SK-N-SH (cell line): ENCODE measurements at regions of chr21 and their contacts with region 1.

Region 1: DNA sequence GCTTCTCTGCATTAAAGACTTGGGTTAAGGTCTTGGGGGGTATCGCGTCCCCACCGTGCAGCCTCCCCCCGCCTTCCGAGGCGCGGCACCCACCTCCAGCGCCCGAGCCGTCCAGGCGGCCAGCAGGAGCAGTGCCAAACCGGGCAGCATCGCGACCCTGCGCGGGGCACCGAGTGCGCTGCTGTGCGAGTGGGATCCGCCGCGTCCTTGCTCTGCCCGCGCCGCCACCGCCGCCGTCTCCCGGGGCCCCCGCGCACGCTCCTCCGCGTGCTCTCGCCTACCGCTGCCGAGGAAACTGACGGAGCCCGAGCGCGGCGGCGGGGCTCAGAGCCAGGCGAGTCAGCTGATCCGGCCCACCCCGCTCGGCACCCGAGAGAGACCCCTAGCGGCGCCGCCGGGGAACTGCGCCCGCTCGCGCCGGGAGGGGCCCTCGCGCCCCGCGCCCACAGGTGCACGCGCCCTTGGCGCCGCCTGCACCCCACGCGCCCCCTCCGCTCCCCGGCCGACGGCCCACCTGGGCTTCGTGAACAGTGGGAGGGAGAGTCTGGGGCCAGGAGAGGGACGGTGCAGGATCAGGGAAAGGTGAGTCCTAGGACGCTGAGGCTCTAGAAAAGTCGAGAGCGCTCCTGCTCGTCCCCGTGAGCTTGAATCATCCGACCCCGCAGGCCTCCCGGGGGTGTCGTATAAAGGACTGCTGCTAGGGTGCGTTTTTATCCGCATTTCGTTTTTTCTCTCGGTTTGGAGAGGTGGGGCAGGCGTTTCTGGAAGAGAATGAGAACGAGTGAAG is at the start of gene APP:
- DNase-seq: peak; percentile 98
- H3K4me3 ChIP-seq: peak within 1 kb of the TSS; percentile 65 to 92
- H3K27ac ChIP-seq: peak within 1 kb of the TSS; percentile 76 to 97
- H3K4me1 ChIP-seq: peaks cover 24 to 25% of the 10 kb centered on the region in 2 experiments; a peak in 3 of 4 replicates
- H3K27me3 ChIP-seq: no peaks in the 10 kb centered on the region
- CTCF ChIP-seq: peak; percentile 81
- EP300 ChIP-seq: 0 out of 4 replicates have a peak, but pooled peaks of 1 of the 2 experiments have one; percentile 7
- RAD21 ChIP-seq: peak; percentile 67
- polyA plus RNA-seq, gene APP: 780 and 789 TPM in 2 replicates

Region 2: DNA sequence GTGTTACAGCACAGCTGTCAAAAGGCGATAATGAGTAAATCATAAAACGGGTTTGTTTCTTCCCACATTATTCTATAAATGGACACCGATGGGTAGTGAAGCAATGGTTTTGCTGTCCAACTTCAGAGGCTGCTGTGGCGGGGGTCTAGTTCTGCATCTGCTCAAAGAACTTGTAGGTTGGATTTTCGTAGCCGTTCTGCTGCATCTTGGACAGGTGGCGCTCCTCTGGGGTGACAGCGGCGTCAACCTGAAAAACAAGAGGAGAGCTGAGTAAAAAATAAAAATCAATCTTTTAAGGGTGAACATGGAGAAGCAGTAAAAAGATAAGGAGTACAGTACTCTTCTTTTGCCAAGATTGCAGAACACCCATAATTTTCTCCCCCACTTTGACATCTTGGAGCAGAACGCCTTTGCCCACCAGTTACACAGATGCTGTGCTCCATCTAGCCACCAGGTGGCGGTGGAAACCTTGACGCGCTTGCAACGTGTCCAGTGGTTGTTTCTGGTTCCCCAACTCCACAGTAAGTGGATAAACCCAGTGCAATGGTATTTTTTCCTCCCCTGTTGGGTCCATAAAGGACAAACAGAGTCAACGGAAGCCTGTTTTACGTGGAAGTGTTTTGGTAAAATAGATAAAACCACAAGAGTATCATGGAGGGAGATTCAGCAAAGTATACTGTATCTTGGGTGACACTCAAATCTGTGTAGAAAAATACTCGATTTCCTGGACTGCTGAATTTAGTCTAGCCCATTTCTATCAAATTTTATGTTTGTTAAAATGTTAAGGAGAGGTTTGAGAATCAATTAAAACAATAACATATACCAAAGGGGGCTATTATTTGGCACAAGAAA is 288.9 kb before region 1 on chr21:
- CTCF ChIA-PET with region 1: interaction called, 59 read pairs
- POLR2A ChIA-PET with region 1: no interaction called
- DNase-seq: peak; percentile 64
- H3K4me3 ChIP-seq: peak overlapping the region in 1 of 2 experiments; percentile 17; a peak in 2 of 4 replicates
- H3K27ac ChIP-seq: no peak overlapping the region; a peak in 1 of 4 replicates
- H3K4me1 ChIP-seq: no peaks in the 10 kb centered on the region
- H3K27me3 ChIP-seq: no peaks in the 10 kb centered on the region
- CTCF ChIP-seq: peak; percentile 97
- EP300 ChIP-seq: no peak
- RAD21 ChIP-seq: peak; percentile 87

Region 3: GRCh38 chr21:25895565-25896205 is 275.0 kb before region 1 on chr21:
- CTCF ChIA-PET with region 1: interaction called, 14 read pairs
- POLR2A ChIA-PET with region 1: interaction called, 3 read pairs
- DNase-seq: peak; percentile 43
- H3K4me3 ChIP-seq: no peak overlapping the region
- H3K27ac ChIP-seq: peak overlapping the region in 1 of 2 experiments; percentile 34; a peak in 2 of 4 replicates
- H3K4me1 ChIP-seq: peaks cover 0 to 18% of the 10 kb centered on the region in 2 experiments; a peak in 2 of 4 replicates
- H3K27me3 ChIP-seq: no peaks in the 10 kb centered on the region
- CTCF ChIP-seq: peak; percentile 64
- EP300 ChIP-seq: no peak
- RAD21 ChIP-seq: peak; percentile 73

Region 4: DNA sequence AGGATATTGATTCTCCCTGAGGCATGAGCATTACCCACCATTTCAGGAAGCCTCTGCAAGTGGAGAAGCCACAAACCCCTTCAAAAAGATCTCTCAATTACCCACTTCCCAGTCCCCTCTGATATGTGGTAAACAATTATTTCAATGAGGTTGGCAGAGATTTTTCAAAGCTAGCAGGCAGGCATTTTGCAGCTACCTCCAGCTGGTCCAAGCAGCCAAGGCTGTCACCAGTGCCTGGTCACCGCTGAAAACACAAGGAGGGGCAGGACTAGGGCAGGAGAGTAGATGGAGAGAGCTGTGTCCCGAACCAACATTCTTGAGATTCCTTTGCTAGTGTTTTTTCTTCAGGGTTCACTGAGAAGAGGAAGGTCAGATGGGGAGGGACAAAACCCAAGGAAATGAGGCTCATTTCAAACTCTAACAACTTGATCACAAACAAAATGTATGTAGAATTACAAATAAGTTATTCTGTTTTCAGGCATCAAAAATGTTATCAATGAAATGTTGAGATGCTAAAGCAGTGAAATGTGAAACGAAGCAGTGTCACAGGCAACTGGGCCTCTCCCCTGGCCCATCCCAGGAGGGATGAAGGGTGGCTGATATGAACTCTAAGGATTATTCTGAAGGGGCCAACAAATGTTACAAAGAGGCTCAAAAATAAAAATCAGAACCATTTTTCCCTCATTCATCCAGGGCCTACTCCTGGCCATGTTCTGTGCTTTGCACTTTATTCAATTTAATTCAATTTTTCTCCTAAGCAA is 22.4 kb before region 1 on chr21:
- CTCF ChIA-PET with region 1: interaction called, 18 read pairs
- POLR2A ChIA-PET with region 1: no interaction called
- DNase-seq: no peak
- H3K4me3 ChIP-seq: no peak overlapping the region
- H3K27ac ChIP-seq: peak overlapping the region; percentile 55 to 67
- H3K4me1 ChIP-seq: peaks cover 19 to 20% of the 10 kb centered on the region in 2 experiments; a peak in 3 of 4 replicates
- H3K27me3 ChIP-seq: no peaks in the 10 kb centered on the region
- CTCF ChIP-seq: no peak
- EP300 ChIP-seq: no peak
- RAD21 ChIP-seq: no peak

Region 5: DNA sequence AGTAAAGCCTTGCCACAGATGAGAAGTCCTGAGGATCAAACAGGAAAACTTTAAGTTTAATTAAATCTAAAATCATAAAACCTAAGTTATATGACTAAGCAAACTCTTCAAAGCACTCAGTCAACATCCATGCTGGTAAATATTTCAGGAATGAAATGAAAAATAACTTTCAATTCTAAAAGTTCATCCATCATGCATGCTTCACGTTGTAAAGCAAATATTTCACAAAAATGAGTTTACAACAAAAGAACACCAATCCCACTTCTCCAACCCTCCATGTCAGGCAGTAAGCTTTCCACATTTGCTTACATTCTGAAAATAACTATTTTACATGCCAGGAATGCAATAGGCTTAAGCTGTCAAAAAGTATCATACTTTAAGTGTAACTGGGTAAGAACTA is 16.9 kb before region 1 on chr21:
- CTCF ChIA-PET with region 1: interaction called, 18 read pairs
- POLR2A ChIA-PET with region 1: no interaction called
- DNase-seq: no peak
- H3K4me3 ChIP-seq: no peak overlapping the region
- H3K27ac ChIP-seq: peak overlapping the region; percentile 20 to 46; a peak in 2 of 4 replicates
- H3K4me1 ChIP-seq: peaks cover 6 to 18% of the 10 kb centered on the region in 2 experiments; a peak in 3 of 4 replicates
- H3K27me3 ChIP-seq: no peaks in the 10 kb centered on the region
- CTCF ChIP-seq: no peak
- EP300 ChIP-seq: no peak
- RAD21 ChIP-seq: no peak

Region 6: DNA sequence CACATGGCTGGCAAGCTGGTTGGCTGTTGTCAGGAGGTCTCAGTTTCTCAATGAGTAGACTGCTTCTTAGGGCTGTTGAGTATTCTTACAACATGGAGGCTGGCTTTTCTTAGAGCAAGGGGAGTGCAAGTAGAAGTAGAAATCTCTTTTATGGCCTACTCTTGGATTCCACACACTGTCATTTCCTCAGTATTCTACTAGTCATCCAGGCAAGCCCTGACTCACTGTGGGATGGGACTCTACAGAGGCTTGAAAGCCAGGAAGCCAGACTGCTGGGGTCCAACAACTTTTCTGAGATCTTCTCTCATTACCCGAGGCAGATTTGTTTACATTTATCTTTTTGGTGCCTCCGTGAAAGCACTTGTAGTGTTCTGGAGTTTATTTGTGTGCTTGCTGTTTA is 196.1 kb after region 1 on chr21:
- CTCF ChIA-PET with region 1: no interaction called
- POLR2A ChIA-PET with region 1: no interaction called
- DNase-seq: no peak
- H3K4me3 ChIP-seq: no peak overlapping the region
- H3K27ac ChIP-seq: no peak overlapping the region
- H3K4me1 ChIP-seq: no peaks in the 10 kb centered on the region
- H3K27me3 ChIP-seq: no peaks in the 10 kb centered on the region
- CTCF ChIP-seq: no peak
- EP300 ChIP-seq: no peak
- RAD21 ChIP-seq: no peak

Region 7: DNA sequence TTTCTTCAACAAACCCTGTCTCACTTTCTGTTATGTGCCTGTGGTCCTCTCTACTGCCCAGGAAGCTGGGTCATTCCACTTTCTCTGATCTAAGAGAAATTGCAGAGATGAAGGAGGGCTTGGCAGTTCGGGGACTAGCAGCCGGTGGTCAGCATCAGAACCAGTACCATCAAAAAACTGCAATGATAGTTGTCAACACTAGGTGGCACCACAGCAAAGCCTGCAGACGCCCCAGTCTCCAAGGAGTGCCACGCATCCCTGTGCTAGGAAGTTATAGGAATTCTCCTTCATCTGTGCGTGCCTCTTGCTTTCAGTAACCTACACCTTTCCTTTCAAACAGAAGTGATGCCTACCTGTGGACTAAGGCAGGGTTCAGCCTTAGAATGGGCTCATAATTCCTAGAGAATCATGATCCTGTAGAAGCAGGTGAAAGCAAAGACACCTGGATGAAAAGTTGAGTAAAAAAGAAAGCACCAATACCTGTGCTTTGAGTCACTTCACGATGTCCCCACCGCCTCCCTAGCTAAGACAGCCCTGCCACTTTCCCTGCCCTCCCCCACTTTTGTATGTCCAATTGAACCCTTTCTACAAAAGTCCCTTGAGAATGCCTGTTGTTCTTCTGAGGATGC is 545.3 kb after region 1 on chr21:
- CTCF ChIA-PET with region 1: interaction called, 22 read pairs
- POLR2A ChIA-PET with region 1: no interaction called
- DNase-seq: peak; percentile 48
- H3K4me3 ChIP-seq: no peak overlapping the region
- H3K27ac ChIP-seq: no peak overlapping the region
- H3K4me1 ChIP-seq: no peaks in the 10 kb centered on the region
- H3K27me3 ChIP-seq: no peaks in the 10 kb centered on the region
- CTCF ChIP-seq: peak; percentile 79
- EP300 ChIP-seq: no peak
- RAD21 ChIP-seq: peak; percentile 58